ENCODE measurements at regions of chr9 and their contacts with region 1.

Region 1: GRCh38 chr9:128341435-128341849 is 1.1 kb downstream of the SLC27A4 start:
- DNase-seq: peak; percentile 88
- ATAC-seq: peak; percentile 61
- H3K4me3 Mint-ChIP-seq: peak overlapping the region; percentile 79
- H3K27ac Mint-ChIP-seq: peak overlapping the region; percentile 79
- H3K4me1 Mint-ChIP-seq: peaks cover 9% of the 10 kb centered on the region
- H3K27me3 Mint-ChIP-seq: no peaks in the 10 kb centered on the region

Region 2: DNA sequence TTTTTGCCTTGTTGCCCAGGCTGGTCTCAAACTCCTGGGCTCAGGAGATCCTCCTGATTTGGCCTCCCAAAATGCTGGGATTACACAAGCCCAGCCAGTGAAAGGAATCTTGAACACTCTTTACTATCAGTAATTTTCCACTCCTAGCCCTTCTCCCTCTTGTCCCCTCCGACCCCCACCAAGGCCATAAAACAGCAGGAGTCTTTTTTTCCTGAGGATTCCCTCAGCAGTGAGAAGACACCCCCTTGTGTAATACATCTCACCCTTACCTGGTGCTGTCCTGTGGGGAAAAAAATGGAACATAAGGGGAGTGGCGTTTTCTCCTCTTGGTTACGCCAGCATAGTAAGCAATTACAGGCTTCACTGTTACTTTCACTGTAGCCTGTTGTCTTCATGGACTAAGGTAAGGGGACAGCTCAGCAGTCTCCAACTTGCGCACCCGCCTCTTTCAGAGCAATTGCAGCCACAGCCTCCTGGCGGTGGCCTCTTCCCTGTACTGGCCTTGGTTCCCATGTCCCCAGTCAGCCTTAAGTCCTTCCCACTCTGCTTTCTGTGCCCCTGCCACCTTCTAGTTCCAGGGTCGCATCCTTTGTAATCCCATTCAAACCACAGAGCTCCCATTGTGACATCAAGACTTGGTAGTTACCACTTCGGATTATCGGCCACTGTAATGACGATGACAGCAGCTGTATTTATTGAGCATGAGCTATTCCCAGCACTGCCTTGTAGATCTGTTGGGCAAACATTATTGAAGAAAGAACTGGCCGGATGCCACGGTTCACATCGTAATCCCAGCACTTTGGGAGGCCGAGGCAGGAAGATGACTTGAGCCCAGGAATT is 284.3 kb before region 1 on chr9:
- CTCF ChIA-PET with region 1: no interaction called
- DNase-seq: no peak
- ATAC-seq: no peak
- H3K4me3 Mint-ChIP-seq: no peak overlapping the region
- H3K27ac Mint-ChIP-seq: no peak overlapping the region
- H3K4me1 Mint-ChIP-seq: peaks cover 16% of the 10 kb centered on the region
- H3K27me3 Mint-ChIP-seq: peaks cover 3% of the 10 kb centered on the region

Region 3: GRCh38 chr9:128175102-128175563 is 166.3 kb before region 1 on chr9:
- CTCF ChIA-PET with region 1: no interaction called
- DNase-seq: no peak
- ATAC-seq: no peak
- H3K4me3 Mint-ChIP-seq: no peak overlapping the region
- H3K27ac Mint-ChIP-seq: no peak overlapping the region
- H3K4me1 Mint-ChIP-seq: no peaks in the 10 kb centered on the region
- H3K27me3 Mint-ChIP-seq: no peaks in the 10 kb centered on the region

Region 4: DNA sequence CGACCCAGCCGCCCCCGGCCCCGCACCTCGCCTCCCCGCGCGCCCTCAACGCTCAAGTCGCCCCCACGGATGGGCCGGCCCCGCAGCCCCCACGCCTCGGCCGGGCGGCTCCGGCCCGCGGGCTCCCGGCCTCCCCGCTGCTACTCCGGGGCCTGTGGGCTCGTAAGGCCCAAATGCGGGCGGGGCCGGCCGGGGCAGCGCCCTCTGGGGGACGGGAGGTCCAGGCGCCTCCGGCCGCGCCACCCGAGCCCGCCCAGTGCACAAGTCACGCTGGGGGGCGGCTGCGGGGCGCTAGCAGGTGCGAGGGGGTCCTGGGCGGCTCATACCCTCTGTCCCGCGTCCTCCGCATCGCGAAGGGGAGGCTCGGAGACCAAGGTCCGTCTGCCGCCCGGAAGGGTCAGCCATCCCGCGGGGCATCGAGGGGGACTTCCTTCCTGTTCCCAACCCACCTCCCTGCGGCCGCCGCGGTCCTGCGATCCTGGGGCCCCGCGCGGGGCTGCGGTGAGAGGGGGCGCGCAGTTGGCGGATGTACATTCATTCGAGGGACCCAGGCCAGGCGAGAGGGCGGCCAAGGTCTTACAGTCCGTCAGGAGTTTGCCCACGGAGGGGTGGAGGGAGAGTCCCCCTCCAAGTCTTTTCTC is 149.9 kb before region 1 on chr9 and contains the start of gene CIZ1:
- CTCF ChIA-PET with region 1: interaction called, 10 read pairs
- DNase-seq: peak; percentile 81
- ATAC-seq: peak; percentile 91
- H3K4me3 Mint-ChIP-seq: peak within 1 kb of the TSS; percentile 99
- H3K27ac Mint-ChIP-seq: peak within 1 kb of the TSS; percentile 93
- H3K4me1 Mint-ChIP-seq: peaks cover 42% of the 10 kb centered on the region
- H3K27me3 Mint-ChIP-seq: no peaks in the 10 kb centered on the region
- total RNA-seq, gene CIZ1: 140 to 153 TPM

Region 5: DNA sequence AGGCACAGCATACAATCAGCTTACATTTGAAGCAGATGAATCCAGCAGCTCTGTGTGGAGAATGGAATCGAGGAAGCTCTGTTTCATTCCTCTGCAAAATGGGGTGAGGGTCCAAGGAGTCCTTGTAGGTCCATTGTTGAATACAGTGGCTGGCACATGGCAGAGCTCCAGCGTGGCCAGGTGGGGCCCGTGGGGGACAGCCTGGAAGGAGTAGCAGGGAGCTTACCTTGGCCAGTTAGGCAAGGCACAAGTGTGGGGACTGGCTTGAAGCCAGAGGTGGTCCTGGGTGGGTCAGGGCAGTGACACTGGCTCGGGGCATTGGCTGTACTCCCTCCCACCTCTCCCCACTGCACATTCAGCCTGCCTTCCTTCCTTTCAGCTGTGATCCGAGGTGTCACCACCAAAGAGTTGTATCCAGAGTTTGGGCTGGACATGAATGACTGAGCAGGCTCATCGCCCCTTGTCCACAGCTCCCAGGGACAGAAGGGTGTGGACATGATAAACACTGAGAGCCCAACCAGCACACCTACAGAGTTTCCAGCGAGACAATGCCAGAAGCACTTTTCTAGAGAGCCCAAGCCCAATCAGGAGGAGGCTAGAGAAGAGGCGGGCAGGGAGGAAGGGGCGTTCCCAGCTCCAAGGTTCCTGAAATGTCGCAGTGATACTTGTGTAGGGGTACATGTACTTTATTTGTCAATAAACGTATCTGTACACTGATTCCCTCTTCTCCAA is 53.0 kb before region 1 on chr9:
- CTCF ChIA-PET with region 1: interaction called, 10 read pairs
- DNase-seq: no peak
- ATAC-seq: no peak
- H3K4me3 Mint-ChIP-seq: no peak overlapping the region
- H3K27ac Mint-ChIP-seq: no peak overlapping the region
- H3K4me1 Mint-ChIP-seq: peaks cover 3% of the 10 kb centered on the region
- H3K27me3 Mint-ChIP-seq: no peaks in the 10 kb centered on the region

Region 6: GRCh38 chr9:128296337-128297220 is 44.9 kb before region 1 on chr9:
- CTCF ChIA-PET with region 1: interaction called, 24 read pairs
- DNase-seq: no peak
- ATAC-seq: no peak
- H3K4me3 Mint-ChIP-seq: no peak overlapping the region
- H3K27ac Mint-ChIP-seq: no peak overlapping the region
- H3K4me1 Mint-ChIP-seq: peaks cover 10% of the 10 kb centered on the region
- H3K27me3 Mint-ChIP-seq: no peaks in the 10 kb centered on the region

Region 7: GRCh38 chr9:128322404-128323211 is 18.8 kb before region 1 on chr9 and contains the starts of genes COQ4 and TRUB2:
- CTCF ChIA-PET with region 1: interaction called, 22 read pairs
- DNase-seq: peak; percentile 96
- ATAC-seq: peak; percentile 88
- H3K4me3 Mint-ChIP-seq: peak within 1 kb of the TSS; percentile 92
- H3K27ac Mint-ChIP-seq: peak within 1 kb of the TSS; percentile 94
- H3K4me1 Mint-ChIP-seq: peaks cover 29% of the 10 kb centered on the region
- H3K27me3 Mint-ChIP-seq: no peaks in the 10 kb centered on the region
- total RNA-seq, gene COQ4: 29.8 to 41.1 TPM
- total RNA-seq, gene TRUB2: 22.3 to 34.2 TPM

Region 8: DNA sequence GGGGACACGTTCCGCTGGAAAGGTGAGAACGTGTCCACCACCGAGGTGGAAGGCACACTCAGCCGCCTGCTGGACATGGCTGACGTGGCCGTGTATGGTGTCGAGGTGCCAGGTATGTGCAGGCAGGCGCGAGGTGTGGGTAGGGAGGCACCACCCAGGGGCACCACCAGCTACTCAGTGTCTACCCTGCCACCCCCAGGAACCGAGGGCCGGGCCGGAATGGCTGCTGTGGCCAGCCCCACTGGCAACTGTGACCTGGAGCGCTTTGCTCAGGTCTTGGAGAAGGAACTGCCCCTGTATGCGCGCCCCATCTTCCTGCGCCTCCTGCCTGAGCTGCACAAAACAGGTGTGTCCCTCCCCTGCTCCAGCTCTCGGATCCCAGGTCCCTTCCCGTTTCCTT is 14.0 kb after region 1 on chr9:
- CTCF ChIA-PET with region 1: interaction called, 18 read pairs
- DNase-seq: no peak
- ATAC-seq: no peak
- H3K4me3 Mint-ChIP-seq: no peak overlapping the region
- H3K27ac Mint-ChIP-seq: no peak overlapping the region
- H3K4me1 Mint-ChIP-seq: no peaks in the 10 kb centered on the region
- H3K27me3 Mint-ChIP-seq: no peaks in the 10 kb centered on the region

Region 9: DNA sequence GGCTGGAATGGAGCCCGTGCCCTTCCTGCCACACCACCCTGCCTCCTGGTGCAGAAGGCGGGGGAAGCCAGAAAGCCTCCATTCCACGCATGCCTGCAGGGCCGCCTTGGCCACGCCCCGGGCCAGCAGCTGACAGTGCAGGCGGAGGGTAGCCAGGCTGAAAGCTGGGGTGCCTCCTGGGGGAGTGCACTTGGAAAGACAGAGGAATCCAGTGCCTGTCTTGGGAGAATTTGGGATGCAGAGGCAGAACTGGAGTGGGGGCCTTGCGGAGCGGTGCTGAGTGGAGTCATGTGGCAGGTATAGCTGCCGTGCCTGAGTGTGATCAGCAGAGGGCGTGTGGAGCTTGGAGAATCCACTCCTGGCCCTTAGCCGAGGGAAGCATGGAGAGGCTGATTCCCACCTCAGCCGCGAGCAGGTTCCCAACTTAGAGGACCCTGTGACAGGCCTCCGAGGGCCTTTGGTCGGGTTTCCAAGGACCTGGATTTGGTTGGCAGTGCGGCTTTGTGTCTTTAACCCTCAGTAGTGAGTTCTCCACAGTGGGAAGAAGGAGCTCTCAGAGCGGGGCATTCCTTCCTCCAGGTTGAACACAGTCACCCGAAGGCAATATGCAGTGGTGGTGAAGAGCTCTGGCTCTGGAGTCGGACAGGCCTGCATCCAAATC is 20.7 kb after region 1 on chr9:
- CTCF ChIA-PET with region 1: interaction called, 18 read pairs
- DNase-seq: peak; percentile 81
- ATAC-seq: peak; percentile 91
- H3K4me3 Mint-ChIP-seq: peak overlapping the region; percentile 60
- H3K27ac Mint-ChIP-seq: peak overlapping the region; percentile 79
- H3K4me1 Mint-ChIP-seq: peaks cover 13% of the 10 kb centered on the region
- H3K27me3 Mint-ChIP-seq: no peaks in the 10 kb centered on the region

Region 10: GRCh38 chr9:128470560-128470959 is 129.1 kb after region 1 on chr9:
- CTCF ChIA-PET with region 1: no interaction called
- DNase-seq: no peak
- ATAC-seq: no peak
- H3K4me3 Mint-ChIP-seq: no peak overlapping the region
- H3K27ac Mint-ChIP-seq: peak overlapping the region; percentile 44
- H3K4me1 Mint-ChIP-seq: peaks cover 2% of the 10 kb centered on the region
- H3K27me3 Mint-ChIP-seq: no peaks in the 10 kb centered on the region

Region 11: GRCh38 chr9:128723866-128724743 is 382.7 kb after region 1 on chr9 and contains the start of gene ZDHHC12:
- CTCF ChIA-PET with region 1: no interaction called
- DNase-seq: peak; percentile 100
- ATAC-seq: peak; percentile 98
- H3K4me3 Mint-ChIP-seq: peak within 1 kb of the TSS; percentile 100
- H3K27ac Mint-ChIP-seq: peak within 1 kb of the TSS; percentile 88
- H3K4me1 Mint-ChIP-seq: peaks cover 39% of the 10 kb centered on the region
- H3K27me3 Mint-ChIP-seq: no peaks in the 10 kb centered on the region
- total RNA-seq, gene ZDHHC12: 67.8 to 90.0 TPM

Measured in activated CD8-positive, alpha-beta memory T cell treated with anti-CD3 and anti-CD28 coated beads, Interleukin-2, amount 10 ng/mL, durations not matched to agents 7 days and 5 days (primary cell).